MCF 10A (cell line): ENCODE measurements at regions of chr9 and their contacts with region 1.

Region 1: DNA sequence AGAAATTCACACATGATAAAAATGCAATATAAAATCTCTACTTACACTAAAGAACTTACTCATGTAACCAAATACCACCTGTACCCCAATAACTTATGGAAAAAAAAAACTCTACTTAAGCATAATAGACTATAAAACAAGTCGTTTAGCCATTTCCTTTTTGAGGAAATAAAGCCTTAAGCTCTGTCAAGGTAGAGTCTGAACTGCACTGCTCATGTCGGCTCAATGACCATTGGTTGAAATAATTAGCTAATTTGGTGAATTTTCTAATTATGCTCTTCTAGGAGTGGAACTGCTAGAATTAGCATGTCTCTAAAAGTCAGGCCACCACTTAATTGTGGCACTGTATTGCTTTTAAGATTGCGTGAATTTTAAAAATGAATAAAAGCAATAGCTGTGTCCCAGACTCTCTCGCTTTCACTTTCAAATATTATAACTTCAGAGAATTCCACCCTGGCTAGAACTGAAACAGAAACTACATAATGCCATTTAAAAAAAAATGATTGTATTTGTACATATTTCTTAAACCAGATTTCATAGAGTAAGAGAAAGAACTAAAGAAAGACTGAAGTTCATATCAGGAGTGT is 113.0 kb upstream of the PCA3 start:
- DNase-seq: no peak
- H3K4me3 Mint-ChIP-seq: no peak overlapping the region
- H3K27ac Mint-ChIP-seq: peak overlapping the region; percentile 95
- H3K4me1 Mint-ChIP-seq: peaks cover 42% of the 10 kb centered on the region
- H3K27me3 Mint-ChIP-seq: no peaks in the 10 kb centered on the region
- CTCF ChIP-seq: no peak

Region 2: DNA sequence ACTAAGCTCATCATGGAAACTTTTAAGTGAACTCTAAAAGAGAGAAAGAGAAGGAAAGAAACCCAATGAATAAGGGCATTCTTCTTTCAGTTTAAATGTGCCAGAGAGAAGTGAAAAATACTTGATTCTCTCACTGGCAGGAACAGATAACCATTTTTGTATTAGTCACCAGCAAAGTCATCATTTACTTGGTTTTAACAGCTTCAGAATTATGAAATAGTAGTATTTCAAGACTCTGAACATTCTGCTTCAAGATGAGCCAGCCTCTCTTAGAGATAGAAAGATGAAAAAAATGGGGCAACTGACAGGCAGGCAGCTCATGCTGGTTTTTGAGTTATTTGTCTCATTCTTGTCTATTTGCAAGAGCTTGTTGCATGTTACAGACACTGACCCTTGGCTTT is 88.7 kb before region 1 on chr9:
- CTCF ChIA-PET with region 1: no interaction called
- POLR2A ChIA-PET with region 1: no interaction called
- intact Hi-C with region 1: loop called (anchors 5 kb)
- DNase-seq: peak; percentile 47
- H3K4me3 Mint-ChIP-seq: peak overlapping the region; percentile 23
- H3K27ac Mint-ChIP-seq: peak overlapping the region; percentile 57
- H3K4me1 Mint-ChIP-seq: peaks cover 37% of the 10 kb centered on the region
- H3K27me3 Mint-ChIP-seq: no peaks in the 10 kb centered on the region
- CTCF ChIP-seq: no peak

Region 3: GRCh38 chr9:76926324-76926731 is 275.1 kb after region 1 on chr9:
- CTCF ChIA-PET with region 1: no interaction called
- POLR2A ChIA-PET with region 1: no interaction called
- intact Hi-C with region 1: no loop called
- DNase-seq: peak; percentile 86
- H3K4me3 Mint-ChIP-seq: no peak overlapping the region
- H3K27ac Mint-ChIP-seq: peak overlapping the region; percentile 73
- H3K4me1 Mint-ChIP-seq: peaks cover 13% of the 10 kb centered on the region
- H3K27me3 Mint-ChIP-seq: no peaks in the 10 kb centered on the region
- CTCF ChIP-seq: no peak

Region 4: DNA sequence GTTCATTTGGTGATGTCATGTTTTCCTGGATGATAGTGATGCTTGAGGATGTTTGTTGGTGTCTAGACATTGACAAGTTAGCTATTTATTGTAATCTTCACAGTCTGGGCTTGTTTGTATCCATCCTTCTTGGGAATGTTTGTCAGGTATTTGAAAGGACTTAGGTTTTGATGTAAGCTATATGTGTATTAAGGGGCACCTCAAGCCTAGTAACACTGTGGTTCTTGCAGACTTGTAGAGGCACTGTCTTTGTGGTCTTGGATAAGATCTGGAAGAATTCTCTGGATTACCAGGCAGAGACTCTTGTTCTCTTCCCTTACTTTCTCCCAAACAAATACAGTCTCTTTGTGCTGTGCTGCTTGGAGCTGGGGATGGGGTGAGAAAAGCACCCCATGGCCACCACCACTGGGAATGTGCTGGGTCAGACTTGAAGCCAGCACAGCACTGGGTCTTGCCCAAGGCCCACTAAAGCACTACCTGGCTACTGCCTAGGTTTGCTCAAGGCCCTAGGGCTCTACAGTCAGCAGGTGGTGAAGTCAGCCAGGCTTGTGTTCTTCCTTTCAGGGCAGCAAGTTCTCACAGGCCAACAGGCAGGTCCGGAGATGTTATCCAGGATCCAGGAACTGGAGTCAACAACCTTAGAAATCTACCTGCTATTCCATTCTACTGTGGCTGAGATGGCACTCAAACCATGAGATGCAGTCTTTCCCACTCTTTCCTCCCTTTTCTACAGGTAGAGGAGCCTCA is 1046.2 kb after region 1 on chr9:
- CTCF ChIA-PET with region 1: no interaction called
- POLR2A ChIA-PET with region 1: no interaction called
- intact Hi-C with region 1: no loop called
- DNase-seq: no peak
- H3K4me3 Mint-ChIP-seq: no peak overlapping the region
- H3K27ac Mint-ChIP-seq: no peak overlapping the region
- H3K4me1 Mint-ChIP-seq: no peaks in the 10 kb centered on the region
- H3K27me3 Mint-ChIP-seq: no peaks in the 10 kb centered on the region
- CTCF ChIP-seq: no peak